ENCODE measurements at regions of chr20 and their contacts with region 1.

Region 1: DNA sequence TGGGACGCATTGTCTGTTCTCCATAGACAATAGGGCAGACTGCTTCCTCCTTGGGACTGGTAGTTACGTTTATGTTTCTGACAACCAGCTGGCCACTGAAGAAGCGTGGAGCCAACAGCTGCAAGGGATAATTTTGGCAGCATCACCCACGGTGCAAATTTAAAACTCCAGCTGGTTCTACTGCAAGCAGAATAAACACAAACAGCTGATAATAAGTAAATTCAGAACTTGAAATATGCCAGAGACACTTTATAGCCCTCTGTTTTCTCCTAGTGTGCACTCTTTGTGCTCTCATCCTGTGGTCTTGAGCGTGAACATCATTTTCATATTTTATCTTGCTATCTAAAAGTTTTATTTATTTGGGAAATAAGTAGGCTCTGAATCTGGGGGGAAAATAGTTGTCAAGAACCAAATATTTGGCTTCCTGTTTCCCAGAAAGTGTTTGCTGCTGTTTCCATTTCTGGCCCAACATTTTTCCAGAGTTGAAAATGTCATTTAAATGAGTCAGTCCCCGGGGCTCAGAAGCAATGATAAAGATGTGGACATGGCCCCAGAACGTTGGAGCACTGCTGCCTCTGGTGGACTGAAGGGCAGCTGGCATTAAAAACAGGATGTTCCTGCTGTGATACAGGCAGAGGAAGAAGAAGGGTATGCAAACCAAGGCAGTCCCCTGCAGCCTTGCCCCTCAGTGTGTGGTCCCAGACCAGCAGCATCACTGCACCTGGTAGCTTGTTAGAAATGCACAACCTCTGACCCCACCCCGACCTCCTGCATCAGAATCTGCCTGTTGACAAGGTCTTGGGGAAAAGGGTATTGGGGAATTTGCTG is 12.5 kb upstream of the THBD start:
- DNase-seq: peak in 1 of 2 donors; percentile 86
- H3K4me3 ChIP-seq: peak overlapping the region; percentile 13 to 27
- H3K27ac ChIP-seq: peak overlapping the region; percentile 85 to 96
- H3K4me1 ChIP-seq: peaks cover 15 to 39% of the 10 kb centered on the region in 2 donors
- H3K27me3 ChIP-seq: no peaks in the 10 kb centered on the region
- CTCF ChIP-seq: peak; percentile 49 to 73 (median 66)

Region 2: DNA sequence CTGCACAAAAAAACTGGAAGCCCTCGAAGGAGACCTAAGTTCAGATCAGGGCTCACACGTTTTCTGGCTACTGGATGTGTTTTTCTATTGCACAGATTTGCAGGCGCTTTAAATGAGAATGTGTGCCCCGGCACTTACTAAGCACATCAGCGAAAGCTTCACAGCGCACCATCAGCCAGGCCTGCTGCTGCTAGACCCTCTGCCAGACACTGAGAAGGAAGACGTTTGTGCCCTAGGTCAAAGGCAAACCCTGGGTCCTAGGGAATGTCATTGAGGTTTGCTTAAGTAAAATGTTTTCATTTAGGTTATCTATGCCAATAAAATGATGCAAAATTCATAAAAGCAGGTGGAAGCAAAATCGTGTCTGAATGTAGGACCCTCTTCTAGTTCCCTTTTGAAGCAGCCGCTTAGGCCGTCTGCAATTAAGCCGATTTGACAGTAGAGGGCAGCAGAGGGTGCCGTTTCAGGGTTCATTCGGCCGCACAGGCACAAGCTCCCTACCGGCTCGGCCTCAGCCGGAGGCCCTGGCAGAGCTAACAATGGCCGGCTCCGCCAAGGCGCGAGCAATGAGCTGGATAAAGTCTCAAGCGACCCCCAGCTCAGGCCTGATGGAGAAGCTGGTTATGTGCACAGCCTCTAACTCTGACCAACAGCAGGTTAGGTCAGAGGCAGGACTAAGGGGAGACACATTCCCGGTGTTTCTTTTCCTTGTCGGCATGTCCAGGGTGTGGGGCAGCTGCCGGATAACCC is 370.4 kb before region 1 on chr20:
- intact Hi-C with region 1: loop called (anchors 5 kb)
- DNase-seq: peak in 1 of 2 donors; percentile 88
- H3K4me3 ChIP-seq: peak overlapping the region in 1 of 2 donors; percentile 28
- H3K27ac ChIP-seq: no peak overlapping the region
- H3K4me1 ChIP-seq: peaks cover 0 to 6% of the 10 kb centered on the region in 2 donors
- H3K27me3 ChIP-seq: no peaks in the 10 kb centered on the region
- CTCF ChIP-seq: peak; percentile 82 to 91 (median 85)

Region 3: DNA sequence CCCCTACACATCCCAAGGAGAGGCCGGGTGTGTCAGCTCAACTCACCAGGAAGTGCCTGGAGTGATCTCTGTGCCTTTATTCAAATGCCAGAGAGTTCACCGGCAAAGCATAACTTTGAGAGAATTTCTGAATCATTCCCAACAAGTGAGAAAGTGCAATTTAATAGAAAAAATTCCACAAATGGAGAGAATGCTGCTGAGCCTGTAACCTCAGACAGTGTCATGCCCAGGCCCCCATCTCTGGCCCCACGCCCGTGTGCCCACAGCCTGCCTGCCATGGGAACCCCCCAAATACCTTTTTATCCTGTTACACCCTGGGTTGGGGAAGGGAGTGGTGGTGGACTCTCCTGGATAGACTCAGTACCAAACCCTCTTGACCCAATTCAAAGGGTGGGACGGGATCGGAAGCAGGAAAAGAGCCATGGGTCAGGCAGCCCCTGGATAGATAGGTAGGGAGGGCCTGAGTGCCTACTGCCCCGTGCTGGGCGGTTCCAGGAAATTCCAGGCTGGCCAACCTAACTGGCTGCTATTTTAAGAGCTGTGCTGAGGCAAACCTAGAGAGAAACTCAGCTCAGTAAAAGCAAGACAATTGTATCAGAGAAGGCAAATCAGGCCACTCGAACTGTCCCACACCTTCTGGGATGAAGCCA is 298.6 kb before region 1 on chr20:
- intact Hi-C with region 1: loop called (anchors 5 kb)
- DNase-seq: peak in 1 of 2 donors; percentile 81
- H3K4me3 ChIP-seq: peak overlapping the region in 1 of 2 donors; percentile 39
- H3K27ac ChIP-seq: peak overlapping the region; percentile 87 to 94
- H3K4me1 ChIP-seq: peaks cover 5 to 36% of the 10 kb centered on the region in 2 donors
- H3K27me3 ChIP-seq: no peaks in the 10 kb centered on the region
- CTCF ChIP-seq: no peak

Region 4: DNA sequence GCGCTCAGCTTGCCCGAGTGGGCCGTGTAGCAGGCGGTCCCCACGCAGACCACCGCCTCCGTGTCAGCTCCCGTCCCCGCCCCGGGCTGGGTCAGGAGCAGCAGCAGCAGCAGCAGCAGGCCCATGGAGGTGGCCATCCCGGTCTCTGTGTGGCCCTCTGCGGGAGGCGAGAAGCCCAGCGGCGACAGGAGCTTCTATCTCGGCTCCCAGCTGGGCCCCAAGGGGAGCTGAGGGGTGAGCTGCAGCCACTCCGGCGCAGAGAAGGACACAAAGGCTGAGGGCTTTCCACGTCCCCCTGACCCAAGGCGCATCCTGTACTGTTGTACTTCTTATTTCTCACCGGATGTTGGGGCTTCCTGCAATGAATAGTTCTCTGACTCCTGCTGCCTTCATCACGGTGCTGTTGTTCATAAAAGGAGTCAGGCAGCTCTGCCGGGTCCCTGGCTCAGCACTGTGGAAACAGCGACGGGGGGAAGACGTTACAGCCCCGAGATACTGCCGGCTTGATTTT is 24.2 kb after region 1 on chr20 and contains the start of gene CD93:
- intact Hi-C with region 1: loop called (anchors 1 kb)
- DNase-seq: peak in 1 of 2 donors; percentile 87
- H3K4me3 ChIP-seq: peak within 1 kb of the TSS; percentile 29 to 44
- H3K27ac ChIP-seq: peak within 1 kb of the TSS; percentile 90 to 99
- H3K4me1 ChIP-seq: peaks cover 8 to 42% of the 10 kb centered on the region in 2 donors
- H3K27me3 ChIP-seq: no peaks in the 10 kb centered on the region
- CTCF ChIP-seq: no peak
- total RNA-seq, gene CD93: 206 TPM